ENCODE measurements at regions of chr15 and their contacts with region 1.

Region 1: DNA sequence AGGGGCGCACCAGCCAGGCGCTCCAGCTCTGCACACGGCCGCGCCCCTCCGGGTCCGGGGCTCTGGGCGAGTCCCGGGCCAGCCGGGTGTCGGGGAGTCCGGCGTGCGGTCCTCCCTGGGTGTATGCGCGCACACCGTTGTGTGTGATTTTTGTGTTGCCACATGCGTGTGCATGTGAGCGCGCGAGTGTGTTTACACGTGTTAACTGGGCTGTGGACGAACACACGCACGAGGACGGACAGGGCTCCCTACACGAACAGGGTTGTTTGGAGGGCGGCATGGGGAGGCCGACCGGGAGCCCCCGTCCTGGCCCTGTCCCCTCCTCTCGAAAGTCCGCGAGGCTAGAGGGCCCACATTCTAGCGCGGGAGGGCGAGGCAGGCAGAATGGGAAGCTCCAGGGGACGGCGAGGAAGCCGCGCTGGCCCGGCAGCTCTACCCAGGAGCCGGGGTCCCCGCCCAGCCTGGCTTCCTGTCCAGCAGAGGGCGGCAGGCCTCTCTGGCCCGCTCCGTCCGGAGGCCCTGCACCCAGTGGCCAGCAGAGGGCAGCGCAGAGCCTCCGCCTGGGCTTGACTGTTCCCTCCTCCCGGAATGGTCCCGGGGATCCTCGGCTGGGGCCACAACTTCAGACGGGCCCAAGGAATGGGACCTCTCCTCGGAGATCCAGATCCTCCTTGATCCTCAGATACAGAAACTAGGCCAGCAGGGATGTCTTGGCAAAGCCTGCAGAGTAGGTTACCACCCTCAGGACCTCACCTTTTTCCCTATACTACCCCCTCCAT is 611 bp upstream of the LINGO1 start:
- DNase-seq: peak; percentile 17
- H3K4me3 ChIP-seq: peak overlapping the region; percentile 52
- CTCF ChIP-seq: peak; percentile 100

Region 2: GRCh38 chr15:77430213-77430612 is 203.1 kb before region 1 on chr15:
- CTCF ChIA-PET with region 1: no interaction called
- POLR2A ChIA-PET with region 1: no interaction called
- DNase-seq: no peak
- H3K4me3 ChIP-seq: no peak overlapping the region
- CTCF ChIP-seq: no peak

Region 3: GRCh38 chr15:77607111-77607893 is 26.0 kb before region 1 on chr15:
- CTCF ChIA-PET with region 1: interaction called, 47 read pairs
- POLR2A ChIA-PET with region 1: no interaction called
- DNase-seq: no peak
- H3K4me3 ChIP-seq: no peak overlapping the region
- CTCF ChIP-seq: no peak

Region 4: GRCh38 chr15:77650265-77650664 is 16.9 kb after region 1 on chr15:
- CTCF ChIA-PET with region 1: interaction called, 107 read pairs
- POLR2A ChIA-PET with region 1: no interaction called
- DNase-seq: no peak
- H3K4me3 ChIP-seq: no peak overlapping the region
- CTCF ChIP-seq: peak; percentile 6

Region 5: GRCh38 chr15:77791941-77792340 is 158.6 kb after region 1 on chr15:
- CTCF ChIA-PET with region 1: interaction called, 17 read pairs
- POLR2A ChIA-PET with region 1: no interaction called
- DNase-seq: no peak
- H3K4me3 ChIP-seq: no peak overlapping the region
- CTCF ChIP-seq: no peak

Region 6: DNA sequence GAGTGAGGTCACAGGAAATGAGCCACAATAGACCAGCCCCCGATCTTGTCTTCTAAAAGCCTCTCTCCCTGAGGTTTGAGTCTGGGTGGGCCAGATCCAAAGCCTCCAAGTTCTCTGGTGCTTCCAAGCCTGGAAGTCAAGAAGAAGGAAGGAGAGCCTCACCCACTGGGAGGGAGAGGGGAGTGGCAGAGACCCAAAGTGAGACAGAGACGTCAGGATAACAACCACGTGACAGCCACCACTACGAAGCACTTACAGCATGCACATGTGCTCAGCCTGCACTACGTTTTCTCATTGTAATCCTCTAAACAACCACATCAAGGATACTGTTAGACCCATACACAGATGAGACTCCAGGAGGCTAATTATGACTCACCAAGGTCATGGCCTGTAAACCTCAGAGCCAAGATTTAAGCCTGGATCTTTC is 196.7 kb after region 1 on chr15:
- CTCF ChIA-PET with region 1: interaction called, 161 read pairs
- POLR2A ChIA-PET with region 1: no interaction called
- DNase-seq: no peak
- H3K4me3 ChIP-seq: no peak overlapping the region
- CTCF ChIP-seq: no peak

Region 7: DNA sequence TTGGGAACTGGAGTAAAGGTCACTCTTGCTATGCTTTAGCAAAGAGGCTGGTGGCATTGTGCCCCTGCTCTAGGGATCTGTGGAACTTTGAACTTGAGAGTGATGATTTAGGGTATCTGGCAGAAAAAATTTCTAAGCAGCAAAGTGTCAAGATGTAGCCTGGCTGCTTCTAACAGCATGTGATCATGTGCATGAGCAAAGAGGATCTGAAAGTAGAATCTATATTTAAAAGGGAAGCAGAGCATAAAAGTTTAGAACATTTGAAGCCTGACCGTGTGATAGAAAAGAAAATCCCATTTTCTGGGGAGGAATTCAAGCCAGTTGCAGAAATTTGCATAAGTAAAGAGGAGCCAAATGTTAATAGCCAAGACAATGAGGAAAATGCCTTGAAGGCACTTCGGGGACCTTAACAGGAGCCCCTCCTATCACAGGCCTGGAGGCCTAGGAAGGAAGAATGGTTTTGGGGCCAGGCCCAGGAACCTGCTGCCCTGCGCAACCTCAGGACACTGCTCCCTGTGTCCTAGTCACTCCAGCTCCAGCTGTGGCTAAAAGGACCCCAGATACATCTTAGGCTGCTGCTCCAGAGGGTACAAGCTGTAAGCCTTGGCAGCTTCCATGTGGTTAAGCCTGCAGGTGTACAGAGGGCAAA is 211.6 kb after region 1 on chr15:
- CTCF ChIA-PET with region 1: no interaction called
- POLR2A ChIA-PET with region 1: no interaction called
- DNase-seq: no peak
- H3K4me3 ChIP-seq: no peak overlapping the region
- CTCF ChIP-seq: no peak

Region 8: GRCh38 chr15:78049691-78050440 is 416.5 kb after region 1 on chr15:
- CTCF ChIA-PET with region 1: no interaction called
- POLR2A ChIA-PET with region 1: no interaction called
- DNase-seq: peak; percentile 96
- H3K4me3 ChIP-seq: no peak overlapping the region
- CTCF ChIP-seq: no peak